ENCODE measurements at regions of chr15 and their contacts with region 1.

Region 1: GRCh38 chr15:98518823-98519561 is 129.3 kb upstream of the IGF1R start:
- DNase-seq: peak; percentile 13
- H3K4me3 Mint-ChIP-seq: no peak overlapping the region
- H3K27ac Mint-ChIP-seq: no peak overlapping the region
- H3K4me1 Mint-ChIP-seq: peaks cover 7% of the 10 kb centered on the region
- H3K27me3 Mint-ChIP-seq: peaks cover 6% of the 10 kb centered on the region

Region 2: GRCh38 chr15:98548154-98548971 is 29.4 kb after region 1 on chr15:
- intact Hi-C with region 1: loop called (anchors 1 kb)
- DNase-seq: peak; percentile 21
- H3K4me3 Mint-ChIP-seq: peak overlapping the region; percentile 75
- H3K27ac Mint-ChIP-seq: peak overlapping the region; percentile 50
- H3K4me1 Mint-ChIP-seq: peaks cover 8% of the 10 kb centered on the region
- H3K27me3 Mint-ChIP-seq: peaks cover 52% of the 10 kb centered on the region

Region 3: DNA sequence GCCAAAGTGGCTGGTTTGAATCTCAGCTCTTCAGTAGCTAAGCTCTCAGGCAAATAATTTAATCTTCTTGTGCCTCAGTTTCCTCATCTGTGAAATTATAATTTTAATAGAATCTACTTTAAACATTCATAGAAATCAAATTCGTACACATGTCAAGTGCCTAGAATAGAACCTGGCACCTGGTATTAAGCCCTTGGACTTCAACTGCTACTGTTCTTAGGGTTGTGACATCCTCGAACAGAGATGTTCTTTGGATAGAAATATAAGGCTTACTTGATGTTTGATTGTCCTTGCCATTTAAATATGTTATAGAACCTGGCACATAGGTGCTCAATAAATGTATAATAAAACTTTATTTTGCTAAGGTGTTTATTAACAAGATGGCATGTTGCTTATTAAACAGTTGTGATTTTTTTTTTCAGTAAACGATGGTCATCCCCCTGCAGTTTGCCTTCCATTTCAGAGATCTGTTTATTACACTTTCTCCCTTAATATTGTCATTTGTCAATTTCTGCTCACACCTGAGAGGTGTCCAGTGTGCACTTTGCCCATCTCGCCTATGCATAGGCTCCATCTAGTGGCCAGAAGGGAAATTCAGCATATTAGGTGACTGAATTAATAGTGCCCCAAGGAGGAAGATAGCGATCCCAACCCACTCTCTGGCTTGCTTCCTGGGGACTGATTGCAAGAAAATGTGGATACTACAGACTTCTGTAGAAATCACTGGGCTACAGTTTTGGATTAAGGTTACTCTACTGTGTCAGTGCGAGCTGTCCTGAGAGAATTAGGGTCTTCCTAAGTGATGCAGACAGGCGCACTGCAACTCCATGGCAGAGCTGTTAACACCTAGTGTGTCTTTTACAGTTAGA is 140.1 kb after region 1 on chr15:
- intact Hi-C with region 1: loop called (anchors 1 kb)
- DNase-seq: no peak
- H3K4me3 Mint-ChIP-seq: no peak overlapping the region
- H3K27ac Mint-ChIP-seq: no peak overlapping the region
- H3K4me1 Mint-ChIP-seq: peaks cover 10% of the 10 kb centered on the region
- H3K27me3 Mint-ChIP-seq: peaks cover 14% of the 10 kb centered on the region

Region 4: GRCh38 chr15:98779463-98780071 is 260.6 kb after region 1 on chr15:
- intact Hi-C with region 1: loop called (anchors 10 kb)
- DNase-seq: peak; percentile 51
- H3K4me3 Mint-ChIP-seq: no peak overlapping the region
- H3K27ac Mint-ChIP-seq: no peak overlapping the region
- H3K4me1 Mint-ChIP-seq: peaks cover 29% of the 10 kb centered on the region
- H3K27me3 Mint-ChIP-seq: peaks cover 2% of the 10 kb centered on the region

Region 5: DNA sequence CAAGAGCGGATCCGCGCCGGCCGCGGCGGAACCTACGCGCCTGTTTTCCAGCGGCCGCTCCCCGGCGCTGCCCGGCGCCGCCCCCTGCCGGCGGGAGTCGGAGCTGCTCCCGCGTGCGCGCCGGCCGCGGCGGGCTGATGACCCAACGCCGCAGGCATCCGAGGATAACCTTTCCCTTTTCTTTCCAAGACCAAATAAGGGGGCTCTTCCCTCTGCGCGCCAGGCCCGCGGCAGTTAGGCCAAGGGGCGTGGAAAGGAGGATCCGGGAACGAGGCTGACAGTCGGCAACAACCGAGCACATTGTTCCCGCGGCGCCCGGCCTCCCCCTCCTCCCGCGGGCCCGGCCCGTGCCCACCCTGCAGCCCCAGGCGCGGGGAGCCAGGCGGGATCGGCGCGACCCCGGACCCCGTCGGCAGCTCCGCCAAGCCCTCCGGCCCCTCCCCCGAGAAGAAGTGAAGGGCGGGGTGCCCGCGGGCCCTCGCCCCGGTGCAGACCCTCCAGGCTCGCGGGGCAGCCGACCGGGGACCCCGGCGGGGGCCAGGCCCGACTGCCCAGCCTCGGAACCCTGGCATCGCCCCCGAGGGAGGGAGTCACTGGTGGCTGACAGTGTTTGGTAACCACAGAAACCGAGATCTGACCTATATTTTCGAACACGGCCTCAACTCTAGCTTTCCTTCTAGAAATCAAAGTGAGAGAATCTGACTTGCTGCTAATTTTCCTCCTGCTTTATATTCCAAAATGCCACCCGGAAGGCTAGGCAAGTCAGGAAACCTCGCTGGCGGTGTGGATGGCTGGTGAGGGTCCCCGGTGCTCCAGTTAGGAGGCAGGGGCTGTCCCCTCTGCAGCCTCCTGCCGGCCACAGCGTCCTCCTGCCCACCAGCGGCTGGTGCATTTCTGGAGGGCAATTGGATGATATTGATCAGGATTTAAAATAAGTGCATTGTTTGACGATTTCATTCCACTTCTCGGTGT is 540.3 kb after region 1 on chr15:
- intact Hi-C with region 1: loop called (anchors 1 kb)
- DNase-seq: peak; percentile 34
- H3K4me3 Mint-ChIP-seq: peak overlapping the region; percentile 60
- H3K27ac Mint-ChIP-seq: no peak overlapping the region
- H3K4me1 Mint-ChIP-seq: peaks cover 4% of the 10 kb centered on the region
- H3K27me3 Mint-ChIP-seq: peaks cover 43% of the 10 kb centered on the region

Region 6: DNA sequence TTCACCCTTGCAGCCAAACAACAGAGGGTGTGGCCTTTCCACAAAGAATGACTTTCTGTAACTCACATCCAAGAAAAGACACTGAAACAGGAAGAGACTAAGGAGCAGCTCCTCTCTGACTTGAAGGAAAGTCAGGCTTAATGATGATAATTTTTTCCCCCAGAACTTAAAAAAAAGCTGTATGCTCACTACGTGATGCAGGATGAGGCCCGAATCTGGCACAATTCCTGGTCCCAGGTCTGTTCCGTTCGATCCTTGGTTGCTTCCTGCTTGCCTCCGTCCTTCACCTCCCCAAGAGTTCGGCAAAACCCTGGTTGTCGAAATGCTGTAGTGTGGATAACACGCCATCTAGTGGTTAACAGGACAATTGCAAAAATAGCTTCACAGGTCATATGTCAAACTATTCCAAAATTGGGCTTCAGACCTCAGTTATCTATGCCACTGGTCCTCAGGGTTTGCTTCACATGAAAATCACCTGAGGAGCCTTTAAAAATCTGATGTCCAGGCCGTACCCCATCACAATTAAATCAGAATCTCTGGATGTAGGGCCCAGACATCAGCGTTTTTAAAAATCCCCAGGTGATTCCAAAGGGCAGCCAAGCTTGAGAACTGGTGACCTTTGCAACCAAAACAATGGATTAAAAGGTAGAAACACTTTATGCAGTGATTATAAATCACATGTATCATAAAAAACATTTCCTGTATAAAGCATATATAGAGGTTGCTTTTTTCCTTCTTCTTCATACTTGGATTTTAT is 557.7 kb after region 1 on chr15:
- intact Hi-C with region 1: loop called (anchors 1 kb)
- DNase-seq: peak; percentile 24
- H3K4me3 Mint-ChIP-seq: peak overlapping the region; percentile 73
- H3K27ac Mint-ChIP-seq: no peak overlapping the region
- H3K4me1 Mint-ChIP-seq: peaks cover 2% of the 10 kb centered on the region
- H3K27me3 Mint-ChIP-seq: peaks cover 22% of the 10 kb centered on the region